AG04450 (cell line): ENCODE measurements at regions of chr1 and their contacts with region 1.

Region 1: DNA sequence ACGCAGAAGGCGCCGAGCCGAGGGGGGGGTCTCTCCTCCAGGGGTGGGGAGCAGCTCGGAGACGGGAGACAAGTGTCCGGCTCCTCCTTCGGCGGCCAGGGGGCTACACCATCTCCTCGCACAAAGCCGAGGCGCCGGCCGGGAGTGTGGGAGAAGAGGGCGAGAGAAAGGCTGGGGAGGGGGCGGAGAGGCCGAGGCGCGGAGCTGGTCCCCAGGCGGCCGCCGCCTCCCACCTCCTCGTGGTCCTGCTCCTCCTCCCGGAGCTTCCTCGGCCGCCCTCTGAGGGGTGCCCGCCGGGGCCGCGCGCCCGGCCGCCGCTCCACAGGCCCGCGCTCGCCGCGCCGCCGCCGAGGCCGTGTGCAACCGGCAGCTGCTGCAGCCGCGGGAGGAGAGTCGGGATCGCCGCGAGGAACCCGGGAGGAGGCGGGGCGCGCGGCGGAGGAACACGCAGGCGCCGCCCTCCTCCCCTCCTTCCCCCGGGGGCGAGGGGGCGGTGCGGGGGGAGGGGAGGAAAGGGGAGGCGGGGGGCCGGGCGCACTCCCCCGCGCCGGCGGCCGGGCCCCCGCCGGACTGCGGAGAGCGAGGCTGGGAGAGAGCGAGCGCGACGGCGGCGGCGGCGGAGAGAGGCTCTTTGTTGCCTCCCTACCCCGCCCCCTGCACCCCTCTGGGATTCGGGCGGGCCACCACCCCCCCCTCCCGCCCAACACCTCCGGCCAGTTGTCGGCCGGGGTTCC is at the start of gene ENAH:
- DNase-seq: no peak
- H3K4me3 ChIP-seq: peak within 1 kb of the TSS; percentile 84
- H3K27ac ChIP-seq: peak within 1 kb of the TSS; percentile 72
- H3K27me3 ChIP-seq: no peaks in the 10 kb centered on the region
- CTCF ChIP-seq: no peak
- polyA plus RNA-seq, gene ENAH: 93.9 and 121 TPM in 2 replicates

Region 2: DNA sequence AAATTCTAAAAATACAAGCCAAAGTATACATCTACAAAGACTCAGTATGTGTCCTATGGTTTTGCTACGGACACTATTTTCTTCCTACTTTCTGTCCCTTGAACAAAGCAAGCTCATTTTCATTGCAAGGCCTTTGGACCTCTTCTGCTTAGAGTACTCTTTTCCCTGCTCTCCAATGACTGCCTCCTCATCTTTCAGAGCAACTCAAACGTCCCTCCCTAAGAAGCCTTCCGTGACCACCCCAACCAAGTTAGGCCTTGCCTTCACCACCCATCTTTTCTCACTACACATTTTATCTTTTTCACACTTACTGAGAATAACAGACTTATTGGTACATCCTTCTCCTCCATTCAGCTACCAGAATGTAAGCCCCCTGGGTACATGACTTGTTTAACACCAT is 39.9 kb before region 1 on chr1:
- CTCF ChIA-PET with region 1: no interaction called
- POLR2A ChIA-PET with region 1: interaction called, 11 read pairs
- DNase-seq: no peak
- H3K4me3 ChIP-seq: no peak overlapping the region
- H3K27ac ChIP-seq: no peak overlapping the region
- H3K27me3 ChIP-seq: no peaks in the 10 kb centered on the region
- CTCF ChIP-seq: no peak

Region 3: GRCh38 chr1:225700164-225700740 is 47.4 kb after region 1 on chr1:
- CTCF ChIA-PET with region 1: interaction called, 3 read pairs
- POLR2A ChIA-PET with region 1: interaction called, 26 read pairs
- DNase-seq: peak; percentile 92
- H3K4me3 ChIP-seq: peak overlapping the region; percentile 23
- H3K27ac ChIP-seq: peak overlapping the region; percentile 97
- H3K27me3 ChIP-seq: no peaks in the 10 kb centered on the region
- CTCF ChIP-seq: no peak

Region 4: DNA sequence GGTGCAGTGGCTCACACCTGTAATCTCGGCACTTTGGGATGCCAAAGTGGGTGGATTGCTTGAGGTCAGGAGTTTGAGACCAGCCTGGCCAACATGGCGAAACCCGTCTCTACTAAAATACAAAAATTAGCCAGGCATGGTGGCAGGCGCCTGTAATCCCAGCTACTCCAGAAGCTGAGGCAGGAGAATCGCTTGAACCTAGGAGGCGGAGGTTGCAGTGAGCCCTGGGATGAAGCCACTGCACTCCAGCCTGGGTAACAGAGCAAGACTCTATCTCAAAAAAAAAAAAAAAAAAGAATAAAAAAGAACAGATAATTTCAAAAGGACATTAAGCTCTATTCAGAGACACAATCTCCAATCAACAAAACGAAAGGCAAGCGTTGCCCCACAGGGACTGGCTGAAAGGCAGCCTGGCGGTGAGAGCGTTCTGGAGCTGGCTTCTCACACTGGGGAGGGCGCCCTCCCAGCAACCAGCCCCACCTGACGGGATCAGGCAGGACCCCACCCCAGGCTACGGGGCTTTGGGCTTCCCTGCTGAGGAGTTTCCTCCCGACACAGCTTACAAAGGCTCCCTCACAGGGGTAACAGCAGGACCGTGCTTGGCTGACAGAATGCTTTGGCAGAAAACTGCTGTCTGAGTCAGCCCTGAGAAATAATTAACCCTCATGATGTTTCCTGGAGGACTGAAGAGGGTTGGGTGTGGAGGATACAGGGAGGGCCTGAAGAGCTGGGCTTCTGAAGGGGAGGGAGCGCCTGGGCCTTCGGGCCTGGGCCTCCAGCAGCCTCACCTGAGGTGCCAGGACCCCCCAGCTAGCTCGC is 93.7 kb after region 1 on chr1:
- CTCF ChIA-PET with region 1: interaction called, 3 read pairs
- POLR2A ChIA-PET with region 1: interaction called, 10 read pairs
- DNase-seq: peak; percentile 74
- H3K4me3 ChIP-seq: peak overlapping the region; percentile 56
- H3K27ac ChIP-seq: peak overlapping the region; percentile 88
- H3K27me3 ChIP-seq: no peaks in the 10 kb centered on the region
- CTCF ChIP-seq: peak; percentile 19

Region 5: DNA sequence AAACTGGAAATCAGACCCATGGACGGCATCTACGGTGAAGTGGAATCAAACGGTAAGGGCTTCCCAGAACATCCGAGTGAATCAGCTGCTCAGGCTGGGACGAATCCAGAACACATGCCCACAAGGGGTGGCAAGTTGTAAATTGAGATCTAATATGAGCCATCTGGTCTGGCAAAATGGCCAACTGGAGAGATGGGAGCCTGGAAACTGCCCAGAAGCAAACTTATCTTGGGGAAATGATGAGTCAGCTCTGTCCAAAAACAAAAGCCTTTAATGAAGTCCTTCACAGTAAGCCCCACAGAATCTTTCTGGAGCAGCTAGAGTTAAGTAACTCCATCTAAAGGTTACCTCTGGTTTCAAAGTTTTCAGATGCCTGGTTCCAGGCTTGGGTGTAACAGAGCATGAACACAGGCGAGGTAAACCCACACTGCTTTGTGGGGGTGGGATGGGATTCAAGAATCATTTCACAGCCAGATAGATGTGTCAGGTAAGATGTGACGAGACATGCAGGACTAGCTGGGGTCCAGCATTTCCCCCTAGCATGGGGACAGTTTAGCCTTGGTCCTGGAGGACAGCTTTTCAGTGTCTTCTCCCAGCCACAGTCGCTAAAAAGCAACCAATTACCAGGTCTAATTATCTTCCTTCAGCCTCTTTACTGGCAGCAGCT is 114.2 kb after region 1 on chr1:
- CTCF ChIA-PET with region 1: interaction called, 5 read pairs
- POLR2A ChIA-PET with region 1: interaction called, 15 read pairs
- DNase-seq: peak; percentile 74
- H3K4me3 ChIP-seq: 0 out of 2 replicates have a peak overlapping the region, but pooled peaks have one; percentile 4
- H3K27ac ChIP-seq: peak overlapping the region; percentile 89
- H3K27me3 ChIP-seq: no peaks in the 10 kb centered on the region
- CTCF ChIP-seq: no peak

Region 6: GRCh38 chr1:225772323-225772768 is 119.5 kb after region 1 on chr1:
- CTCF ChIA-PET with region 1: interaction called, 7 read pairs
- POLR2A ChIA-PET with region 1: interaction called, 15 read pairs
- DNase-seq: peak; percentile 82
- H3K4me3 ChIP-seq: no peak overlapping the region
- H3K27ac ChIP-seq: no peak overlapping the region
- H3K27me3 ChIP-seq: no peaks in the 10 kb centered on the region
- CTCF ChIP-seq: peak; percentile 92

Region 7: GRCh38 chr1:225942574-225942973 is 289.7 kb after region 1 on chr1:
- CTCF ChIA-PET with region 1: no interaction called
- POLR2A ChIA-PET with region 1: no interaction called
- DNase-seq: no peak
- H3K4me3 ChIP-seq: no peak overlapping the region
- H3K27ac ChIP-seq: no peak overlapping the region
- H3K27me3 ChIP-seq: peaks cover 13% of the 10 kb centered on the region
- CTCF ChIP-seq: no peak

Region 8: DNA sequence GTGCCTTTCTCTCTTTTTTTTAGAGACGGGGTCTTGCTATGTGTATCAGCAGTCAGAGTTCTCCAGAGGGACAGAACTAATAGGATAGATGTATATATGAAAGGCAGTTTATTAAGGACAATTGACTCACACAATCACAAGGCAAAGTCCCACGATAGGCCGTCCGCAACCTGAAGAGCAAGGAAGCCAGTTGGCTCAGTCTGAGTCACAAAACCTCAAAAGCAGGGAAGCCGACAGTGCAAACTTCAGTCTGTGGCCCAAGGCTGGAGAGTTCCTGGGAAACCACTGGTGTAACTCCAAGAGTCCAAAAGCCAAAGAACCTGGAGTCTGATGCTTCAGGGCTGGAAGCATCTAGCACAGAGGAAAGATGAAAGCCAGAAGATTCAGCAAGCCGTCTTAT is 393.3 kb after region 1 on chr1:
- CTCF ChIA-PET with region 1: no interaction called
- POLR2A ChIA-PET with region 1: no interaction called
- DNase-seq: no peak
- H3K4me3 ChIP-seq: no peak overlapping the region
- H3K27ac ChIP-seq: no peak overlapping the region
- H3K27me3 ChIP-seq: peaks cover 9% of the 10 kb centered on the region
- CTCF ChIP-seq: no peak